Vagina (tissue), 2 donors: ENCODE measurements at regions of chr7 and their contacts with region 1.

Region 1: GRCh38 chr7:22586786-22587140 is 86.8 kb upstream of the STEAP1B start:
- DNase-seq: no peak
- H3K4me3 ChIP-seq: no peak overlapping the region
- H3K27ac ChIP-seq: no peak overlapping the region
- H3K4me1 ChIP-seq: peaks cover 13% of the 10 kb centered on the region
- H3K27me3 ChIP-seq: no peaks in the 10 kb centered on the region
- CTCF ChIP-seq: peak in 1 of 3 experiments; percentile 18
- POLR2A ChIP-seq: no peak

Region 2: DNA sequence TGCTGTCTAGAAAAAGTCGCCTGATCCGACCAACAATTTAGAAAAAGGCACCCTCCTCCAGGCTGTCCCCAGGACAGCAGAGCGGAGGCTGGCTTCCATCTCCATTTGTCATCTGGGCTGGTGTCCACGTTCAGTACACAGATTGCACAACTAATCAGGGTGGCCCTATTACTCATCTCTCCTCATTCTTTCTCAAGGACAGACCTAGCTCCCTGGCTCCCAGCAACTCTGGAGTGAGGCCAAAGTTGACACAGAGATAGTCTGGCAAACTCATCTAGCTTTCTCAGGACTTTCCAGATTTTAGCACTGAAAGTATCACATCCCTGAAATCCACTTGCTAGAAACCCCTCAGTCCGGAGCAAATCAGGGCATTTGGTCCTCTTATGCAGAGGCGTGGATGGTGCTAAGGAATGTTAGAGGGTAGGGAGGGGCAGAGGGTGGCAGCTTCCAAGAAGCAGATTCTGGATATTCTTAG is 968.8 kb before region 1 on chr7:
- intact Hi-C with region 1: no loop called
- DNase-seq: no peak
- H3K4me3 ChIP-seq: no peak overlapping the region
- H3K27ac ChIP-seq: no peak overlapping the region
- H3K4me1 ChIP-seq: no peaks in the 10 kb centered on the region
- H3K27me3 ChIP-seq: no peaks in the 10 kb centered on the region
- CTCF ChIP-seq: no peak
- POLR2A ChIP-seq: no peak

Region 3: DNA sequence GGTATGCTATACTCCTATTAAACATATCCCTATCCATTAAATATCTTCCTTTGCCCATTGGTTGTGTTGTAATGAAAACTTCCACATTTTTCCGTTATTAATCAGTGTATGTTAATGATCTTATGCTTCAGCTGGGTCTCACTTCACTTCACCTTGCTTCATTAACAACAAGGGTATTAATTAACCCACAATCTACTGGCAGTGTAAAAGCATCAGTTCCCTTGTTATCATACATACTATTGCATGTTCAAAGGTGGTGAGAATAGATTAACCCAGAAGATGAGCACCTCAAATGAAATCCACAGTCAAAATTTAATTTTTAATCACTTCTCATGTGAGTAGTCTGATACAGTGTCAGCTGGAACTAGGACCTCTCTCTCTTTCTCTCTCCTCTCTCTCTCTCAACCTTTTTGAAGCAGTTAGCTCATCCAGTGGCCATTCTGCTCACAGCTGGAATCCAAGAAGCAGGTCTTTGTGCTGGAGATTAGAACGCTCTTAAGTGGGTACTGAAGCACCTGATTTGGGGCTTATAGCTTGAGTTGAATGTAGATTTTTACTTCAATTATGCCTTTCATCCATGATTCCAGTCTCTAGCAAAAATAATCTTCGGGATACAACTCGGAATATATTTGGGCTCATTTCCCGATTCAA is 402.1 kb before region 1 on chr7:
- intact Hi-C with region 1: no loop called
- DNase-seq: no peak
- H3K4me3 ChIP-seq: no peak overlapping the region
- H3K27ac ChIP-seq: no peak overlapping the region
- H3K4me1 ChIP-seq: no peaks in the 10 kb centered on the region
- H3K27me3 ChIP-seq: no peaks in the 10 kb centered on the region
- CTCF ChIP-seq: no peak
- POLR2A ChIP-seq: no peak

Region 4: DNA sequence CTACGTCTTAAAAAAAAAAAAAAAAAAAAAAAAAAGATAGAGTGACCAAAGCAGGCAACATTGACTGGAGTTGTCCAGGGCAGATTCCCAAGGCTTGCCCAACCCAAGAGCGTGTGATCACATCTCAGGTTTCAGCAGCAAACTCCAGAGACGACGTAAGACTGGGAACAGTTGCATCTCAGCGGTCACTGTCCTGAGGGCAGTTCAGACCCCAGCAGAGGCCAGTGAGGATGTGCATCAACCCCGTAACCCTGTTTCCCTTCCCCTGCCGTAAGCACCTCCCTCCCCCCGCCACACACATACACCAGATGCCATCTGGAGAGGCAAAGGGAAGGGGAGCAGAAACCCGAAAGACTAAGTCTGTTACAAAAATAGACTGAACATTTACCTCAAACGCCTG is 255.2 kb after region 1 on chr7:
- intact Hi-C with region 1: loop called (anchors 10 kb)
- DNase-seq: no peak
- H3K4me3 ChIP-seq: no peak overlapping the region
- H3K27ac ChIP-seq: peak overlapping the region; percentile 74
- H3K4me1 ChIP-seq: no peaks in the 10 kb centered on the region
- H3K27me3 ChIP-seq: no peaks in the 10 kb centered on the region
- CTCF ChIP-seq: no peak
- POLR2A ChIP-seq: no peak

Region 5: DNA sequence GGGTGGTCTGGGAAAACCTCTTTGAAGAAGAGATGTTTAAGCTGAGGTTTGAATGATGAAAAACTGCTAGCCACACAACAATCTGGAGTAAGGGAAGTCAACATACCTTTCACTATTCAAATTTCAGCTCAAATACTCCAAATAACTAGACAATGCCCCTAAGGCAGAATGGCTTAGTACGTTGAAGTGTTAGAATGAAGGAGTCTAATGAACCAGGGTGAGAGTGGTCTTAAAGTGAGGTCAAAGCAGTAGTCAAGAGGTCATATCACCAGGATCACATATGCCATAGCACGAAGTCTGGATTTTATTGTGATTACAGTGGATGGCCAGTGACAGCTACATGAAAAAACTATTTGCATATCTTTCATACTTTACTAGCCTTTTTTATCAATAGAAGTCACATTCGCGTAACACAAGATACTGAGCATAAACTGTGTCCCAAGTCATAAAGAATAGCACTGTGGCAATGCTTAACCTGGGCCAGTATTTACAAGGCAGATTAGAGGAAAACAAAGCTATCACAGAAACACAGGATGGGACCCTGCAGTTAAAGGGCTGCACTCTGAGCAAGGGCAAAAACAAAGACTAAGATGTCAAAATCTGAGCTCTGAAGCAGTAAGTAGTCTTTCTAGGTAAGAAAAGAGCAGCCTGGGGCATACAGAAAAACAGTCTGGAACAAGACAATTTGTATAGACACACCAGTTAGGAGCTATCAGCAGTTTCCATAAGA is 365.7 kb after region 1 on chr7:
- intact Hi-C with region 1: no loop called
- DNase-seq: no peak
- H3K4me3 ChIP-seq: no peak overlapping the region
- H3K27ac ChIP-seq: no peak overlapping the region
- H3K4me1 ChIP-seq: peaks cover 10% of the 10 kb centered on the region
- H3K27me3 ChIP-seq: no peaks in the 10 kb centered on the region
- CTCF ChIP-seq: no peak
- POLR2A ChIP-seq: no peak

Region 6: GRCh38 chr7:23076774-23077173 is 490.0 kb after region 1 on chr7:
- intact Hi-C with region 1: no loop called
- DNase-seq: no peak
- H3K4me3 ChIP-seq: no peak overlapping the region
- H3K27ac ChIP-seq: no peak overlapping the region
- H3K4me1 ChIP-seq: no peaks in the 10 kb centered on the region
- H3K27me3 ChIP-seq: no peaks in the 10 kb centered on the region
- CTCF ChIP-seq: no peak
- POLR2A ChIP-seq: no peak